Naive thymus-derived CD4-positive, alpha-beta T cell (primary cell): ENCODE measurements at regions of chr22 and their contacts with region 1.

Region 1: DNA sequence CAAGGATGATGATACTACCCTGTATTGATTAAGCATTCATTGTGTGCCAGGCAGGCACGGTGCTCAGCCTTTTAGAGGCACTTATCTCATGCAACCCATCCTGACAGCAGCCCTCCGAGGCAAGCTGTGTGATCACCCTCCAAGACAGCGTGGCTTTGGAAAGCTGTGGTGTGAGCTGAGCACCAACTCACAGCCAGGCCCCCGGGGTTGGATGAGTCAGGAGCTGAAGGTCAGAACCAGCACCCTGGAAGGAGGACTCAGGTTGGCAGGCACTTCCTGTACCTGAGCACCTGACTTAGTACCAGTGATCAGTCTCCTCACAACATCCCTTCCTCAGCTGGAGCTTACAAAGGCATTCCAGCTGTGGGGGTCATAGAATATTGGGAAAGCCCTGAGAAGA is 9.0 kb downstream of the PATZ1 start:
- DNase-seq: no peak
- ATAC-seq: no peak
- H3K4me3 ChIP-seq: no peak overlapping the region
- H3K4me3 Mint-ChIP-seq: no peak overlapping the region
- H3K27ac ChIP-seq: peak overlapping the region; percentile 27
- H3K27ac Mint-ChIP-seq: peak overlapping the region in 8 of 9 donors; percentile 25 to 82 (median 58)
- H3K4me1 ChIP-seq: peaks cover 0 to 26% of the 10 kb centered on the region in 2 donors
- H3K4me1 Mint-ChIP-seq: peaks cover 34 to 86% (median 84%) of the 10 kb centered on the region in 7 donors
- H3K27me3 ChIP-seq: no peaks in the 10 kb centered on the region
- H3K27me3 Mint-ChIP-seq: no peaks in the 10 kb centered on the region

Region 2: DNA sequence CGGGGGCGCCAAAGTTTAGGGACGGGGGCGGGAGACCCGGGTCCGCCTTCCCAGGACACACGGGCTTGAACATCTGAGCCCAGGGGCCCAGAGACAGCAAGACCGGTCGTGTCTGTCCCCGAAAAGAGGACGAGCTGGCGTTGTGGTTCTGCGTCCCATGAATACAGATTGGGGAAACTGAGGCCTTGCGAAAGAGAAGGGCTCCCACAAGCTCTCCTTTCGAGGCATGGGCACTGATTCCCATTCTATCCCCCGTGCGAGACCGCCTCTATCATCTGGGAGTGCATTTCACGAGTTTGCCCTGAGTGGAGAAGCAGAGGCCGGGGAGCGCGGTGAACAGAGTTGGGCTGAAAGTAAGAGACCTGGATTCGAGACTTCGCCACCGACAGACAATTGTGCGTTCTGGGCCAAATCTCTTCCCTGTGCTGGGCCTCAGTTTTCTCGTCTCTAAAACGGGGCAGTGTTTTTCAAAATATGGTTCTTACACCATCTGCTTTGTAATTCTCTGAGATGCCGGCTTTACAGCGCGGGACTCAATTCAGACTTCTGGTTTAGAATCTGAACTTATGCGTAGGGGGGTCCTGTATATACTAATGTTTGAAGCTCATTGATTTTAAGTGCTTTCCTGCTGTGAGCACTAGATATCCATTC is 176.7 kb before region 1 on chr22:
- CTCF ChIA-PET with region 1: no interaction called
- POLR2A ChIA-PET with region 1: interaction called, 12 read pairs
- intact Hi-C with region 1: no loop called
- DNase-seq: peak in 3 of 9 donors; percentile 5 to 26 (median 9)
- ATAC-seq: peak; percentile 47
- H3K4me3 ChIP-seq: peak overlapping the region; percentile 76
- H3K4me3 Mint-ChIP-seq: peak overlapping the region; percentile 87 to 100 (median 99)
- H3K27ac ChIP-seq: peak overlapping the region; percentile 74
- H3K27ac Mint-ChIP-seq: peak overlapping the region; percentile 91 to 100 (median 97)
- H3K4me1 ChIP-seq: peaks cover 12 to 17% of the 10 kb centered on the region in 2 donors
- H3K4me1 Mint-ChIP-seq: peaks cover 25 to 42% (median 35%) of the 10 kb centered on the region in 7 donors
- H3K27me3 ChIP-seq: no peaks in the 10 kb centered on the region
- H3K27me3 Mint-ChIP-seq: peaks cover 0 to 13% (median 0%) of the 10 kb centered on the region in 5 donors

Region 3: DNA sequence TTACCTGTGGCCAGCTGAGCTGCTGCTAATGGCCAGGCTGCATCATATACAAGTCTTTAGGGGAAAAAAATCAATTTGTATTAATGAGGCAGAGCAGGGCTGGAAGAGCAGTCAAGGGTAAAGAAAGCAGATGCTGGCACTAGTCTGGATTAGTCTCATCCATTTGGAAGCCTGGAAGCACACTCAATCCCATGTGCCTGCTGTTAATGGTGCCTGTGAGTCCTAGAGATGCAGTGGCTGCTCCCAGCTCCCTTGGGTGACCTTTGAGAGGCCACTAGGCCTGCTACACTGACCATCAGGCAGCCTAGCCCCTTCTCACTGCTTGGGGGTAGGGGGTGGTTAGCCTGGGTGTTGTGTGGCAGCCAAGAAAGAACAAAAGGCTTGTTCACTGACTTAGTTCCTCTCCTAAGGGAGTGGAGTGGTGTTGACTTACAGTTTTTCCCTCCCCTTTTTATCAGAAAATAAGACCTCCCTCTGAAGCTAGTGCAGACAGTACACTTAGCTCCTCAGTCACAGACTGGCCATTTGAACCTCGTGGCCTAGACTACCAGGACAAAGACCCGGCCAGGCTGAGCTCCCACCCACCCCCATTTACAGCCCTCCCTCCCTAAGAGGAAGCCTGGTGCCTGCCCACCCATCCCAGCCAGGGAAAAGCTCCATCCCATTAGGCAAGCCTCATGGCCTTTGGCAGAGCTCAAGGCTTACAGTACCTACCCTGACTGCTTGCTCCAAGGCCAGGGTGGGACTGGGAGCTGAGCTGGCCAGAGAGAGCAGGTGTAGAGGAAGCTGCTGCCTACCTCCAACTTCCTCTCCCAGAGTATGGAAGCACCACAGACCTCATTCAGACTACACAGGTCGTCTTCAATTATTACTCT is 52.6 kb before region 1 on chr22:
- CTCF ChIA-PET with region 1: no interaction called
- POLR2A ChIA-PET with region 1: interaction called, 109 read pairs
- intact Hi-C with region 1: no loop called
- DNase-seq: no peak
- ATAC-seq: no peak
- H3K4me3 ChIP-seq: peak overlapping the region; percentile 36
- H3K4me3 Mint-ChIP-seq: peak overlapping the region; percentile 79 to 100 (median 98)
- H3K27ac ChIP-seq: peak overlapping the region; percentile 100
- H3K27ac Mint-ChIP-seq: peak overlapping the region; percentile 95 to 100 (median 99)
- H3K4me1 ChIP-seq: peaks cover 70 to 97% of the 10 kb centered on the region in 2 donors
- H3K4me1 Mint-ChIP-seq: peaks cover 51 to 92% (median 83%) of the 10 kb centered on the region in 7 donors
- H3K27me3 ChIP-seq: no peaks in the 10 kb centered on the region
- H3K27me3 Mint-ChIP-seq: no peaks in the 10 kb centered on the region